ENCODE measurements at regions of chr7 and their contacts with region 1.

Region 1: DNA sequence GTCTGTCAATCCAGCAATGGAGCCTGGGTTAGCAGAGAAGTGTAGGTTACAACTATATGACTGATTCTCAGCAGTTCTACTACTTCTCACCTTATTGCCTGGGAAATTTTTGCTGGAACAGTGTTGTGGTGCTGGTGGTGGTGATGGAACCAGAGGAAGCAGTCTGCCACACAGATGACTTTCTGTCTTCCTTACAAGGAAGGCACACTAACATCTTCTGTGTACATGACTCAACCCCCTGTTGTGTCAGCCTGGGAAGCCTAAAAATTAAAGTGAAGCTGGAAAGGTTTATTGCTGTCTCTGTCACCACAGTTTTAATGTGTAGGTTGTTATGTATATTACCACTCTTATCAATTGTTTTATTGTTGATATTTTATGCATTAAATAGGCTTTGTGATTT is 40.3 kb downstream of the ANKRD7 start:
- DNase-seq: no peak
- H3K4me3 Mint-ChIP-seq: no peak overlapping the region
- H3K27ac Mint-ChIP-seq: no peak overlapping the region
- H3K4me1 Mint-ChIP-seq: no peaks in the 10 kb centered on the region
- H3K27me3 Mint-ChIP-seq: peaks cover 8% of the 10 kb centered on the region

Region 2: DNA sequence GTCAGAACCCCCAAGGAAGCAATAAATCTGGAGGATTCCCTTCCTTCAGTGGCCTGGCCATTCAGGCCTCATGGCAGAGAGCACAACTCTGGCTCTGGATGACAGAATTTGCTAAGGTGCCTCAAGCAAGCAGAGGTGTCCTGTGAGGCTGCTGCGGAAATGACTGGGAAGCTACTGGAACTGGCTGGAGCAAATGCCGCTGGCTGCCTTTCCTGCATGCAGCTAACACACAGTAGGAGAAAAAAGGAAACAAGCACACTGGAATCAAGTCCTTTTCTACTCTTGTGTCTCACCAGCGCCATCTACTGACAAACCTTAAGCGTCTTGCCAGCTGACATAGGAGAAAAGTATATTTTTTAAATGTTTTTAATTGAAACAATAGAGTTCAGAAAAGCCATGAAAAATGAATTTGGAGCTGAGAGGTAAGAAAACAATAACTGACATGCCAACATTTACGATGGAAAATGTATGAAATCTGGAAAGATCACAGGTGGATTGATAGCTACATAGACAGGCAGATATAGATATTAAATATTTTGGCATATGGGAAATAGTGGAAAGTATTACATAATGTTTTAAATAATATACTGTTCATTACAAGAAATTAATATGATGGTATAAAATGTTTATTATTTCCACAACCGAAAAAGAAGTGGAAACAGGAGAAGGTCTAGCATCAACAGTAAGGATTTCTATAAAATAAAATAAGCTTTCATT is 911.2 kb after region 1 on chr7:
- intact Hi-C with region 1: loop called (anchors 5 kb)
- DNase-seq: peak; percentile 78
- H3K4me3 Mint-ChIP-seq: no peak overlapping the region
- H3K27ac Mint-ChIP-seq: no peak overlapping the region
- H3K4me1 Mint-ChIP-seq: no peaks in the 10 kb centered on the region
- H3K27me3 Mint-ChIP-seq: no peaks in the 10 kb centered on the region

Measured in activated CD4-positive, alpha-beta T cell treated with anti-CD3 and anti-CD28 coated beads, Interleukin-2, amount 10 ng/mL, durations not matched to agents 24 days and 14 days (primary cell).